PC-9 (cell line): ENCODE measurements at regions of chr18 and their contacts with region 1.

Region 1: GRCh38 chr18:22348521-22349316 is 69.0 kb downstream of the CTAGE1 start:
- DNase-seq: peak; percentile 81
- H3K4me3 ChIP-seq: peak overlapping the region; percentile 60
- H3K27ac ChIP-seq: peak overlapping the region; percentile 87
- H3K4me1 ChIP-seq: peaks cover 40% of the 10 kb centered on the region
- H3K27me3 ChIP-seq: no peaks in the 10 kb centered on the region
- CTCF ChIP-seq: no peak

Region 2: GRCh38 chr18:22108674-22109073 is 240.0 kb before region 1 on chr18:
- CTCF ChIA-PET with region 1: no interaction called
- POLR2A ChIA-PET with region 1: no interaction called
- intact Hi-C with region 1: loop called (anchors 5 kb)
- DNase-seq: peak; percentile 4 to 34
- H3K4me3 ChIP-seq: no peak overlapping the region
- H3K27ac ChIP-seq: no peak overlapping the region
- H3K4me1 ChIP-seq: peaks cover 20% of the 10 kb centered on the region
- H3K27me3 ChIP-seq: no peaks in the 10 kb centered on the region
- CTCF ChIP-seq: no peak; the same call in 1 of the 2 replicates

Region 3: GRCh38 chr18:22282311-22283112 is 66.2 kb before region 1 on chr18:
- CTCF ChIA-PET with region 1: no interaction called
- POLR2A ChIA-PET with region 1: interaction called, 6 read pairs
- intact Hi-C with region 1: loop called (anchors 5 kb)
- DNase-seq: peak; percentile 40 to 96
- H3K4me3 ChIP-seq: peak overlapping the region; percentile 19; the same call in 1 of the 2 replicates
- H3K27ac ChIP-seq: peak overlapping the region; percentile 76
- H3K4me1 ChIP-seq: peaks cover 35% of the 10 kb centered on the region
- H3K27me3 ChIP-seq: no peaks in the 10 kb centered on the region
- CTCF ChIP-seq: no peak

Region 4: GRCh38 chr18:22465859-22466457 is 117.2 kb after region 1 on chr18:
- CTCF ChIA-PET with region 1: interaction called, 4 read pairs
- POLR2A ChIA-PET with region 1: interaction called, 5 read pairs
- intact Hi-C with region 1: loop called (anchors 1 kb)
- DNase-seq: peak; percentile 50 to 91
- H3K4me3 ChIP-seq: peak overlapping the region; percentile 52; the same call in 1 of the 2 replicates
- H3K27ac ChIP-seq: peak overlapping the region; percentile 100
- H3K4me1 ChIP-seq: peaks cover 39% of the 10 kb centered on the region
- H3K27me3 ChIP-seq: no peaks in the 10 kb centered on the region
- CTCF ChIP-seq: no peak

Region 5: GRCh38 chr18:23266717-23267446 is 918.2 kb after region 1 on chr18:
- CTCF ChIA-PET with region 1: no interaction called
- POLR2A ChIA-PET with region 1: no interaction called
- intact Hi-C with region 1: no loop called
- DNase-seq: no peak
- H3K4me3 ChIP-seq: no peak overlapping the region
- H3K27ac ChIP-seq: no peak overlapping the region
- H3K4me1 ChIP-seq: peaks cover 7% of the 10 kb centered on the region
- H3K27me3 ChIP-seq: no peaks in the 10 kb centered on the region
- CTCF ChIP-seq: no peak